Naive thymus-derived CD4-positive, alpha-beta T cell (primary cell): ENCODE measurements at regions of chr20 and their contacts with region 1.

Region 1: DNA sequence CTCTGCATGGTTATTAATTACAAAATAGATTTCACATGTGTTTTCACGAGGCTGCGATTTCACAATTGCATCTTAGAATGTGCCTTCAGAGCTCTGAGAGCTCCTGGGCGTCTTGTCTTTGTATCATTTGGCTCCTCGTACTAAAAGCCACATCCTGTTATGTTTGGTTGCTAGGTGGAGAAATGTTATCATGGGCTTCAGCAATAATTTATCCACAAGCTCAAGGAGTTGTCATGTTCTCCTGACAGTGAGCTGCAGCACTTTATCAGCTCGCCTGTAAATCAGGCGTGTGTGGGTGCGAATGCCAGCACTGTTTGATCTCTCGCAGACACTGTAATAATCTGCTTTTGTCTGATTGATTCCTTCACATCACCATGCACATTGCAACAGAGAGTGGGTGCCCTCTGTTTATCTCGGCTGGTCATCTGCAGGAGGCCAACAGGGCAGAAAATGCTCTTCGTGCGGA is 218.6 kb upstream of the ZFP64 start:
- DNase-seq: peak in 8 of 9 donors; percentile 18 to 93 (median 87)
- ATAC-seq: peak; percentile 94
- H3K4me3 ChIP-seq: peak overlapping the region; percentile 30
- H3K4me3 Mint-ChIP-seq: peak overlapping the region; percentile 63 to 87 (median 82)
- H3K27ac ChIP-seq: peak overlapping the region; percentile 94
- H3K27ac Mint-ChIP-seq: peak overlapping the region; percentile 94 to 100 (median 99)
- H3K4me1 ChIP-seq: peaks cover 68 to 73% of the 10 kb centered on the region in 2 donors
- H3K4me1 Mint-ChIP-seq: peaks cover 34 to 88% (median 76%) of the 10 kb centered on the region in 7 donors
- H3K27me3 ChIP-seq: no peaks in the 10 kb centered on the region
- H3K27me3 Mint-ChIP-seq: no peaks in the 10 kb centered on the region

Region 2: GRCh38 chr20:52305858-52306257 is 104.4 kb before region 1 on chr20:
- CTCF ChIA-PET with region 1: interaction called, 3 read pairs
- POLR2A ChIA-PET with region 1: interaction called, 3 read pairs
- intact Hi-C with region 1: loop called in 1 of 2 experiments (anchors 1 kb)
- DNase-seq: peak in 7 of 9 donors; percentile 18 to 70 (median 52)
- ATAC-seq: peak; percentile 87
- H3K4me3 ChIP-seq: no peak overlapping the region
- H3K4me3 Mint-ChIP-seq: peak overlapping the region; percentile 2 to 76 (median 58)
- H3K27ac ChIP-seq: peak overlapping the region; percentile 43
- H3K27ac Mint-ChIP-seq: peak overlapping the region; percentile 60 to 93 (median 86)
- H3K4me1 ChIP-seq: peaks cover 0 to 27% of the 10 kb centered on the region in 2 donors
- H3K4me1 Mint-ChIP-seq: peaks cover 16 to 77% (median 60%) of the 10 kb centered on the region in 7 donors
- H3K27me3 ChIP-seq: no peaks in the 10 kb centered on the region
- H3K27me3 Mint-ChIP-seq: peaks cover 0 to 2% (median 0%) of the 10 kb centered on the region in 5 donors

Region 3: DNA sequence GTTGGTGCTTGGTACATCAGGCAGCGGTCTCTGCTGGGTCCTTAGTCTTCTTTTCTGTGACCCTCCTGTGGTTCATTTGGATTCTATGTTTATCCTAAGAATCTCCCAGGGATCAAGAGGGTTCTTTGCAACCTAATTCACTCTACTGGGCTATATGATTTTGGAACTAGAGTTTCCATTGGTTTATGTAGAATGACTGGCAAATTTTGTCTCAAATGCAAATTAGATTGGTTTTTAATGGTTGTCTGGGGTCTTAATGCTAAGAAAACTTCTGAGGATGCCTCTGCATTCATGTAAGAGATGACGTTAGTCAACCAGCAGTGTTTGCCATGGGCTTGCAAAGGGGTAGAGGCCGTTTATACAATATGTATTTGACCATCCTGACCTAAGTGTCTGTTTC is 88.8 kb before region 1 on chr20:
- CTCF ChIA-PET with region 1: no interaction called
- POLR2A ChIA-PET with region 1: no interaction called
- intact Hi-C with region 1: no loop called
- DNase-seq: no peak
- ATAC-seq: no peak
- H3K4me3 ChIP-seq: no peak overlapping the region
- H3K4me3 Mint-ChIP-seq: no peak overlapping the region
- H3K27ac ChIP-seq: no peak overlapping the region
- H3K27ac Mint-ChIP-seq: peak overlapping the region in 1 of 9 donors; percentile 24
- H3K4me1 ChIP-seq: no peaks in the 10 kb centered on the region
- H3K4me1 Mint-ChIP-seq: peaks cover 0 to 12% (median 4%) of the 10 kb centered on the region in 7 donors
- H3K27me3 ChIP-seq: no peaks in the 10 kb centered on the region
- H3K27me3 Mint-ChIP-seq: peaks cover 0 to 10% (median 0%) of the 10 kb centered on the region in 5 donors

Region 4: DNA sequence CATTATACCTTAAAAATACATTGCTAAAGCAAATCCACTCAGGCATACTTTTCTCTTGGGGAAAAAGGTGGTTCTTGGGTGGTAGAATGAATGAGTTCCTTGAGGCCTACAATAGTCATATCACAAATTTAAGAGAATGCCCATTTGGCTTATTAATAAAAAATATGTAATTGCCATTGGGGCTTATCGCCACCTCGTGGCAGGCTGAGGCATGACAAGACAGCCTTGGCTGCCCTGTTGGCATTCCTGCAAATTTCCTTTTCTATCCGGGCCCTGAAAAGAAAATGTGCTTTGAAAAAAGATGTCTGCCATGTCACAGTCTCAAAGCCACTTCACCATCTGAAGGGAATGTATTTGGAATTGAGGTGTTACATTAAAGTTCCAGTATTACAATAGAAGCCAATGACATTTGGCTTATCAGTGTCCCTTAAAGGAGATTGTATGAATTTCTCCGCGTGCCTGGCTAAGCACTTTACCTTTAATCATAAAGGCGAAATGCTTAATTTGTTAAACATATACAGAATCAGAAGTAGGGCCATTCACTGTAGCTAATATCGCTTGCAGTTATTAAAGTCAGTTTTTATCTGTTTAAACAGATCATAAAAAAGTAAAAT is 30.4 kb before region 1 on chr20:
- CTCF ChIA-PET with region 1: interaction called, 23 read pairs
- POLR2A ChIA-PET with region 1: interaction called, 42 read pairs
- intact Hi-C with region 1: loop called (anchors 1 to 2 kb)
- DNase-seq: peak in 6 of 9 donors; percentile 13 to 35 (median 22)
- ATAC-seq: no peak
- H3K4me3 ChIP-seq: no peak overlapping the region
- H3K4me3 Mint-ChIP-seq: peak overlapping the region in 1 of 10 donors; percentile 14
- H3K27ac ChIP-seq: no peak overlapping the region
- H3K27ac Mint-ChIP-seq: peak overlapping the region in 5 of 9 donors; percentile 6 to 71 (median 45)
- H3K4me1 ChIP-seq: peaks cover 0 to 14% of the 10 kb centered on the region in 2 donors
- H3K4me1 Mint-ChIP-seq: peaks cover 0 to 47% (median 25%) of the 10 kb centered on the region in 7 donors
- H3K27me3 ChIP-seq: no peaks in the 10 kb centered on the region
- H3K27me3 Mint-ChIP-seq: peaks cover 0 to 2% (median 0%) of the 10 kb centered on the region in 5 donors

Region 5: GRCh38 chr20:53001498-53002301 is 591.5 kb after region 1 on chr20:
- CTCF ChIA-PET with region 1: no interaction called
- POLR2A ChIA-PET with region 1: interaction called, 31 read pairs
- intact Hi-C with region 1: loop called in 1 of 2 experiments (anchors 1 kb)
- DNase-seq: peak in 7 of 9 donors; percentile 49 to 79 (median 71)
- ATAC-seq: peak; percentile 82
- H3K4me3 ChIP-seq: peak overlapping the region; percentile 32
- H3K4me3 Mint-ChIP-seq: peak overlapping the region; percentile 73 to 94 (median 84)
- H3K27ac ChIP-seq: peak overlapping the region; percentile 88
- H3K27ac Mint-ChIP-seq: peak overlapping the region in 7 of 9 donors; percentile 89 to 99 (median 97)
- H3K4me1 ChIP-seq: peaks cover 0 to 64% of the 10 kb centered on the region in 2 donors
- H3K4me1 Mint-ChIP-seq: peaks cover 27 to 97% (median 87%) of the 10 kb centered on the region in 7 donors
- H3K27me3 ChIP-seq: no peaks in the 10 kb centered on the region
- H3K27me3 Mint-ChIP-seq: no peaks in the 10 kb centered on the region

Region 6: DNA sequence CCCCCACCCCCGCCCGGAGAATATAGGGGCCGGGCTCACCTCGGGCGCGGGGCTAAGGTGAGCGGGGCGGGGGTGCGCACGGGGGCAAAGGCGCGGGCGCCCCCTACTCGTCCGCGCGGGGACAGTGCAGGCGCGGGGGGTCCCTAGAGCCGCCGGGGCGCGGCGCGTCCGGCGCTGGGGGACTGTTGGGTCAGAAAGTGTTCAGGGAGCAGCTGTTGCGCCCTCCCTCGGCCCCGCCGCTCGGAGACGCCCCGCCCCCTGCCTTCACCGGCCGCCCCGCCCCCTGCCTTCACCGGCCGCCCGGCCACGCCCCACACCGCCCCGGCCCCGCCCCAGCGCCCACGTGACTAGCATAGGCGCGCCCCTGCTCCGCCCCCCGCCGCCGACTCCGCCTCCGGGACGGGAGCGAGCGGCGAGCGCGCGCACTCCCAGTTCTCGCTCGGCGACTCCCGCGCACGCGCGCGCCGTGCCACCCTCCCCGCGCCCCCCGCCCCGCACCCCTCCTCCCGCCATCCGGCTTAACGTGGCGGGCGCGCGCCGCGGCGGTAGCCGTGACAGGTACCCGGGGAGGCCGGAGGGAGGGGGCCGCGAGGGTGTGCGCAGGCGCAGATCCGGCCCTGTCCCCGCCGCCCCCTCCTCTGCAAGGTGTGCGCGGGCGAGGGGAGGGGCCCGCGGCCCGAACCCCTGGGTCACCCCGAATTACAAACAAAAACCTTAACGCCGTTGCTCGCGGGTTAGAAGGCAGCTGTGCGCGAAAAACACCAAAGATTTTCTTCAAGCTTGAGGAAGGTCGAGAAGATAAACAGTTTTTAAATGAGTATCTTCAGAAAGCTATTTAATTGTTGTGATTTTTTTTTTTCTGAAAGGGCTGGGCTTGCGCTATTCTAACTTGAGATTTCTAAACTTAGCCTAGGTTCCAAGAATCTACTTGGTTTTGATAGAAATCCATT is 1184.1 kb after region 1 on chr20:
- CTCF ChIA-PET with region 1: no interaction called
- POLR2A ChIA-PET with region 1: no interaction called
- intact Hi-C with region 1: loop called in 1 of 2 experiments (anchors 1 kb)
- DNase-seq: peak; percentile 93 to 100 (median 96)
- ATAC-seq: peak; percentile 90
- H3K4me3 ChIP-seq: peak overlapping the region; percentile 81
- H3K4me3 Mint-ChIP-seq: peak overlapping the region; percentile 89 to 99 (median 92)
- H3K27ac ChIP-seq: peak overlapping the region; percentile 97
- H3K27ac Mint-ChIP-seq: peak overlapping the region; percentile 90 to 98 (median 97)
- H3K4me1 ChIP-seq: peaks cover 14 to 21% of the 10 kb centered on the region in 2 donors
- H3K4me1 Mint-ChIP-seq: peaks cover 23 to 66% (median 54%) of the 10 kb centered on the region in 7 donors
- H3K27me3 ChIP-seq: no peaks in the 10 kb centered on the region
- H3K27me3 Mint-ChIP-seq: no peaks in the 10 kb centered on the region